Vagina (tissue), 2 donors: ENCODE measurements at regions of chr11 and their contacts with region 1.

Region 1: GRCh38 chr11:124758317-124759203 is 3.5 kb downstream of the ESAM start:
- DNase-seq: no peak
- H3K4me3 ChIP-seq: peak overlapping the region; percentile 50 to 53
- H3K27ac ChIP-seq: peak overlapping the region; percentile 71
- H3K4me1 ChIP-seq: peaks cover 50% of the 10 kb centered on the region
- H3K27me3 ChIP-seq: peaks cover 6% of the 10 kb centered on the region
- CTCF ChIP-seq: peak in 2 of 3 experiments; percentile 9 to 47
- POLR2A ChIP-seq: no peak

Region 2: GRCh38 chr11:124481365-124482323 is 276.9 kb before region 1 on chr11:
- intact Hi-C with region 1: no loop called
- DNase-seq: no peak
- H3K4me3 ChIP-seq: peak overlapping the region in 1 of 2 donors; percentile 13
- H3K27ac ChIP-seq: no peak overlapping the region
- H3K4me1 ChIP-seq: no peaks in the 10 kb centered on the region
- H3K27me3 ChIP-seq: no peaks in the 10 kb centered on the region
- CTCF ChIP-seq: no peak
- POLR2A ChIP-seq: no peak

Region 3: GRCh38 chr11:124586238-124586860 is 172.2 kb before region 1 on chr11:
- intact Hi-C with region 1: no loop called
- DNase-seq: no peak
- H3K4me3 ChIP-seq: no peak overlapping the region
- H3K27ac ChIP-seq: no peak overlapping the region
- H3K4me1 ChIP-seq: no peaks in the 10 kb centered on the region
- H3K27me3 ChIP-seq: no peaks in the 10 kb centered on the region
- CTCF ChIP-seq: peak in 1 of 3 experiments; percentile 21
- POLR2A ChIP-seq: no peak

Region 4: DNA sequence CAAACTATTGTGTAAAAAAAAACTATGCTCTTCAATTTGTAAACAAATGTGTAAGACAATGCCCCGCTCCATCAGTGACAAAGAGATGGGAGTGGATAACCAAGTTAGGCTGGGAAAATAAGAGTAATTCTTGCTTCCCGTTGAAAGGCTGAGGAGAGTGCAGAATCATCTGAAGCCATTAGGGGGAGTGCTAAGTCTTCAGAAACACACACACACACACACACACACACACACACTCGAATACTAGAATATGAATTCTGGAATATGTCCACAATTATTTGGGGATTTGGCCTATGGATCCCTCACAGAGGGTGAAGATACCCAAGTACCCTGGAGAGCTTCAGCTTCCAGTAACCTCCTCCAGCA is 78.9 kb after region 1 on chr11:
- intact Hi-C with region 1: loop called (anchors 5 kb)
- DNase-seq: peak in 1 of 2 donors; percentile 77
- H3K4me3 ChIP-seq: no peak overlapping the region
- H3K27ac ChIP-seq: no peak overlapping the region
- H3K4me1 ChIP-seq: peaks cover 13% of the 10 kb centered on the region
- H3K27me3 ChIP-seq: peaks cover 8% of the 10 kb centered on the region
- CTCF ChIP-seq: no peak
- POLR2A ChIP-seq: no peak